ENCODE measurements at regions of chr6 and their contacts with region 1.

Region 1: DNA sequence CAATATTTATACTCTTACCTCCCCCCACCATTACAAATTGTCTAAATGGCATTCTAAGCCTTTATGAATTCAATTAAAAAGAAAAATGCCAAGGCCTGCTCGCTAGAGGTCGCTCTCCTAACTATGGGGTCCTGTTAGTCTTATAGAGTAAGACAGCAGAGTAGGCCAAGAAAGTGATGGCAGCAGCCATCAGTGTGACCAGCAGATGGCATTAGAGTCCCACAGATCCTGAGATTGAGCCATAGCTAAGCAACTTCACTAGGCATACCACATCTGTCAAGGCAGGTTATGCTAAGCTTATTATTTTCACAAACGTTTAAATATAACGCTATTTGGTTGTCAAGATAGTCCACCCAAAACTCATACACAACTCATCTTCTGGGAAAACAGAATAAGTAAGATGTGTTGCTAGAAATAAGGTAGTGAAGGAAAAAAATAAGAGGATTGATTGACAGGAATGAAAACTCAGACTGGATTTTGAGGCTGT is 57.6 kb upstream of the SCAF8 start:
- DNase-seq: peak; percentile 95 to 96 (median 95)
- ATAC-seq: peak; percentile 99
- H3K4me3 ChIP-seq: no peak overlapping the region
- H3K27ac ChIP-seq: no peak overlapping the region
- H3K4me1 ChIP-seq: no peaks in the 10 kb centered on the region; a peak in 1 of 5 replicates
- H3K27me3 ChIP-seq: peaks cover 0 to 7% of the 10 kb centered on the region in 2 experiments; a peak in 3 of 5 replicates
- CTCF ChIP-seq: peak; percentile 100
- EP300 ChIP-seq: peak; percentile 35; the same call in 1 of the 2 replicates
- POLR2A ChIP-seq: no peak
- RAD21 ChIP-seq: peak; percentile 100

Region 2: DNA sequence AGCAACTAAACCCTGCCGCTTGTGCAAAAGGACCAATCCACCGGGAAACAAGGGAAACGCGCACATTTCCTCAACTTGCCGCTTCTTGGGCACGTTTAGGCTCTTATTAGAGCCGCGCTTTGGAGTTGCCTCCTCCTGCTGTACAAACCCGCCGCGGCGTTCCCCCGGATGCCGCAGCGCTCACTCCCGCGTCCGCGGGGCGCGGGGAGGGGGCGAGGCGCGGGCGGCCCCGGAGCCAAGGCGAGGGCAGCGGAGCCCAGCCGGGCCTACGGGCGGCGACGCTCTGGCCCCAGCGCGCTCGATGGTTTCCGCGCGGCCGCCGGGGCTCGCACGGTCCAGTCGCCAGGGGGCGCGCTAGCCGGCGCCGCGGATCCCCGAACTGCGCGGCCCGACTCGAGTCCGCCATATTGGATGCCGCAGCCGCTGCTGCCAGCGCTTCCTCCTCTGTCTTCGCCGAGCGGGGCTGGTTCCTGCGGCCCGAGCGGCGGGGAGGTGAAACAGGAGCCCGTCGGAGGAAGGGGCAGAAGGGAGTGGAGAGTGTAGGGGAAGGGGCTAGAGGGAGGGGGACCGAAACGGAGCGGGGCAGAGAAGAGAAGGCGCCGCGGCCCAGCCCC is 57.5 kb after region 1 on chr6 and contains the start of gene SCAF8:
- CTCF ChIA-PET with region 1: interaction called, 10 read pairs
- POLR2A ChIA-PET with region 1: no interaction called
- in situ Hi-C with region 1: no loop called
- intact Hi-C with region 1: loop called (anchors 5 kb)
- DNase-seq: peak; percentile 85 to 93 (median 88)
- ATAC-seq: peak; percentile 85
- H3K4me3 ChIP-seq: peak within 1 kb of the TSS; percentile 96
- H3K27ac ChIP-seq: peak within 1 kb of the TSS; percentile 99
- H3K4me1 ChIP-seq: peaks cover 20 to 28% of the 10 kb centered on the region in 2 experiments; a peak in 4 of 5 replicates
- H3K27me3 ChIP-seq: no peaks in the 10 kb centered on the region
- CTCF ChIP-seq: peak; percentile 71 to 91 (median 86)
- EP300 ChIP-seq: no peak
- POLR2A ChIP-seq: peak; percentile 96
- RAD21 ChIP-seq: peak; percentile 46 to 52
- polyA plus RNA-seq, gene SCAF8: 10.5 to 11.8 TPM

Region 3: GRCh38 chr6:154767003-154767723 is 91.5 kb after region 1 on chr6:
- CTCF ChIA-PET with region 1: no interaction called
- POLR2A ChIA-PET with region 1: no interaction called
- in situ Hi-C with region 1: no loop called
- intact Hi-C with region 1: no loop called
- DNase-seq: no peak
- ATAC-seq: no peak; the same call in 1 of the 3 replicates
- H3K4me3 ChIP-seq: no peak overlapping the region
- H3K27ac ChIP-seq: no peak overlapping the region
- H3K4me1 ChIP-seq: peaks cover 0 to 2% of the 10 kb centered on the region in 2 experiments; a peak in 2 of 5 replicates
- H3K27me3 ChIP-seq: no peaks in the 10 kb centered on the region
- CTCF ChIP-seq: no peak
- EP300 ChIP-seq: no peak
- POLR2A ChIP-seq: no peak
- RAD21 ChIP-seq: no peak

Region 4: GRCh38 chr6:154805288-154805911 is 129.8 kb after region 1 on chr6:
- CTCF ChIA-PET with region 1: interaction called, 59 read pairs
- POLR2A ChIA-PET with region 1: no interaction called
- in situ Hi-C with region 1: loop called (anchors 5 kb)
- intact Hi-C with region 1: loop called (anchors 1 kb)
- DNase-seq: peak; percentile 28 to 42 (median 34)
- ATAC-seq: peak; percentile 69; the same call in 2 of the 3 replicates
- H3K4me3 ChIP-seq: no peak overlapping the region
- H3K27ac ChIP-seq: no peak overlapping the region
- H3K4me1 ChIP-seq: no peaks in the 10 kb centered on the region
- H3K27me3 ChIP-seq: no peaks in the 10 kb centered on the region
- CTCF ChIP-seq: peak in 2 of 3 experiments; percentile 41 to 74; a peak in 3 of 6 replicates
- EP300 ChIP-seq: no peak
- POLR2A ChIP-seq: no peak
- RAD21 ChIP-seq: peak; percentile 61 to 63

Region 5: GRCh38 chr6:154928325-154928922 is 252.8 kb after region 1 on chr6:
- CTCF ChIA-PET with region 1: no interaction called
- POLR2A ChIA-PET with region 1: no interaction called
- in situ Hi-C with region 1: no loop called
- intact Hi-C with region 1: loop called (anchors 1 kb)
- DNase-seq: peak; percentile 69 to 80 (median 74)
- ATAC-seq: peak; percentile 88
- H3K4me3 ChIP-seq: no peak overlapping the region
- H3K27ac ChIP-seq: no peak overlapping the region
- H3K4me1 ChIP-seq: peaks cover 0 to 15% of the 10 kb centered on the region in 2 experiments; a peak in 3 of 5 replicates
- H3K27me3 ChIP-seq: peaks cover 0 to 6% of the 10 kb centered on the region in 2 experiments; a peak in 1 of 5 replicates
- CTCF ChIP-seq: peak; percentile 80 to 92 (median 84)
- EP300 ChIP-seq: no peak
- POLR2A ChIP-seq: no peak
- RAD21 ChIP-seq: peak; percentile 91 to 93

Region 6: DNA sequence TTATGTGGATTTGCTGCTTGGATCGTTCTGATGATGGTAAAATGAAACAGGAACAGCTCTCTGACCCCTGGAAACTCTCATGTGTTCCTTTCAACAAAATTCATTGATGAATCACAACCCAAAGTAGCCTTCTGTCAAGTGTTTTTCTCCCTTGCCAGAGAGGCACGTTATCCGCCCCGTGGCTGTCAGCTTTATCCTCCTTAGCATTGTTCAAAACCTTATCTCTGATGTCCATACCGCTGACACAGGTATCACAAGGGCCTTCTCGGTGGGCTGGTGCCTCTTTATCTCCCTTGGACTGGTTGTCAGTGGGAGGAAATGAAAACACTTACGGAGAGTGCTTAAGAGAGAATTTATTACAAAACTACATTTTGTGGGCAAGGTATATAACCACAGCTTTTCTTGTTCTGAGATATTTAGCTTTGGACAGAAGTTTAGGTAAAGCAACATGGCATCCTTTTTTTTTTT is 404.4 kb after region 1 on chr6:
- CTCF ChIA-PET with region 1: no interaction called
- POLR2A ChIA-PET with region 1: no interaction called
- in situ Hi-C with region 1: no loop called
- intact Hi-C with region 1: no loop called
- DNase-seq: peak; percentile 74 to 89 (median 82)
- ATAC-seq: peak; percentile 88
- H3K4me3 ChIP-seq: no peak overlapping the region
- H3K27ac ChIP-seq: no peak overlapping the region
- H3K4me1 ChIP-seq: peaks cover 13 to 24% of the 10 kb centered on the region in 2 experiments; a peak in 3 of 5 replicates
- H3K27me3 ChIP-seq: peaks cover 6 to 22% of the 10 kb centered on the region in 2 experiments
- CTCF ChIP-seq: no peak
- EP300 ChIP-seq: peak; percentile 94
- POLR2A ChIP-seq: no peak
- RAD21 ChIP-seq: no peak

Region 7: GRCh38 chr6:155174576-155175211 is 499.0 kb after region 1 on chr6:
- CTCF ChIA-PET with region 1: interaction called, 25 read pairs
- POLR2A ChIA-PET with region 1: no interaction called
- in situ Hi-C with region 1: loop called (anchors 5 kb)
- intact Hi-C with region 1: loop called (anchors 1 kb)
- DNase-seq: peak; percentile 60 to 83 (median 72)
- ATAC-seq: peak; percentile 98
- H3K4me3 ChIP-seq: no peak overlapping the region
- H3K27ac ChIP-seq: no peak overlapping the region
- H3K4me1 ChIP-seq: peaks cover 0 to 2% of the 10 kb centered on the region in 2 experiments; a peak in 1 of 5 replicates
- H3K27me3 ChIP-seq: peaks cover 5 to 15% of the 10 kb centered on the region in 2 experiments; a peak in 3 of 5 replicates
- CTCF ChIP-seq: peak; percentile 71 to 79 (median 79)
- EP300 ChIP-seq: no peak
- POLR2A ChIP-seq: no peak
- RAD21 ChIP-seq: peak; percentile 79 to 94

Measured in K562 (cell line).